Esophagus muscularis mucosa (tissue), 4 donors: ENCODE measurements at regions of chr2 and their contacts with region 1.

Region 1: DNA sequence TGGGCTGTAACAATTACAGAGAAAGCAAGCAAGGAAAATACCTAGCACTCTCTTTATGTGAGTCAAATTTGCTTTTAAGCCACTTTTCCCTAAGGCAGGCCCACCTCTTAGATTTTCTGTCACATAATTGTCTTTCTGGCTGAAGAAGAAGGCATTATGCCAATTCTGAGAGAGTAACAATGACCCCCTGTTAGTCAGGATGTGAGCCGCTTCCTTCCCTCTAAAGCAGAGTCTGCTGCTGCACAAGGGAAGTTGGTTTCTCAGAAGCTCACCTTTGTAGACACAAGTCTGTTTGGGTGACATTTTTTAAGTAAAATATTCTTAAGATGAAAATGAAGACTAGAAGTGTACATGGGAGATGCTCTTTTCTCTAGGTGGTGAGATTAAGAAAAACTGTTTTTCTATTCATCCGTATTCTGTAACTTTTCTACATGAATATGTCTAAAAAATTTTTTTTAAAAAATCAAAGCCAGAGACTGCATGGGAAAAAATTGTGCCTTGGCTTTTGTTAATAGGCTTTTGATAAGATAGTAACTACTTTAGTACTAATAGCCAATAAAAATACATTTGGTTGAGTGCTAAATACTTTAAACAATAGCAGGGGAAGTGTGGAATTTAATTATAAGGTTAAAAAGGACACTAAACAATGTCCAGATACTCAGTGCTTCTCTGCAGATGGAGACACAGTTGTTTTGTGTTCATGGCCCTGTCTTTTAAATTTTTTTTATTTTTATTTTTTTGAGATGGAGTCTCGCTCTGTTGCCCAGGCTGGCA is 33.4 kb upstream of the VPS54 start:
- DNase-seq: no peak
- H3K4me3 ChIP-seq: no peak overlapping the region
- H3K27ac ChIP-seq: peak overlapping the region in 3 of 4 donors; percentile 13 to 42 (median 16)
- H3K4me1 ChIP-seq: peaks cover 0 to 7% (median 5%) of the 10 kb centered on the region in 4 donors
- H3K27me3 ChIP-seq: no peaks in the 10 kb centered on the region
- CTCF ChIP-seq: no peak
- EP300 ChIP-seq: no peak
- POLR2A ChIP-seq: no peak

Region 2: DNA sequence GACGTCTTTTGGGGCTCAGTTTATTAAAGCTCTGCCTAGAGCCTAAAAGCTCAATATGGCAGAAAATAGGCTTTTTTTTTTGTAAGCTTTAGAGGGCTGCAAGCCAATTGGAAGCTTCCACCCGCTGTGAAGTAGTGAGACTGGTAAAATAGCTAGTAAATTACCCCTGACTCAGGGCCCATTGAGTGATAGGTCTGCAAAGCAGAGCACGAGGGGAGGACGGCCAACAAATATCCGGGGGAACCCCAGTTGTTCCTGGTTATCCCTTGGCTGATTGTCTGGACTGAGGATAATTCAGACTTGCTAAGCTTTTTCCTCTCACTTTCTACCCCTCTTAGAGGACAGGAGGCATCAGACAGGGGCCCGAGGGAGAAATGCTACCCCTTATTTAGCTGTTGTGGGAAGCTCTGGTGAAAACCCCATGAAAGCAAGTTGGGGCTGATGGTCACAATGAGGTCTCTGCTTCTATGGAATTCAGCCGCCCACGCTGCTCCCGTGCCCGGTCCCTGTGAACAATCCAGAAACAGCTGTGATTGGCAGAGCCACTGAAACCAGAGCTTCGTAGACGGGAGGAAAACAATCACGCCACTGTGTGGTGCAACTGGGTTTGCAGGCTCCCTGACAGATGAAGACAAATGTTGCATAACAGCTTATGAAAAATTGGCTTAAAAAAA is 259.4 kb after region 1 on chr2:
- intact Hi-C with region 1: loop called (anchors 5 kb)
- DNase-seq: peak; percentile 92
- H3K4me3 ChIP-seq: peak overlapping the region in 3 of 4 donors; percentile 10 to 22 (median 18)
- H3K27ac ChIP-seq: peak overlapping the region in 2 of 4 donors; percentile 7 to 46
- H3K4me1 ChIP-seq: peaks cover 16 to 18% (median 16%) of the 10 kb centered on the region in 4 donors
- H3K27me3 ChIP-seq: no peaks in the 10 kb centered on the region
- CTCF ChIP-seq: peak; percentile 40 to 52 (median 44)
- EP300 ChIP-seq: no peak
- POLR2A ChIP-seq: no peak

Region 3: DNA sequence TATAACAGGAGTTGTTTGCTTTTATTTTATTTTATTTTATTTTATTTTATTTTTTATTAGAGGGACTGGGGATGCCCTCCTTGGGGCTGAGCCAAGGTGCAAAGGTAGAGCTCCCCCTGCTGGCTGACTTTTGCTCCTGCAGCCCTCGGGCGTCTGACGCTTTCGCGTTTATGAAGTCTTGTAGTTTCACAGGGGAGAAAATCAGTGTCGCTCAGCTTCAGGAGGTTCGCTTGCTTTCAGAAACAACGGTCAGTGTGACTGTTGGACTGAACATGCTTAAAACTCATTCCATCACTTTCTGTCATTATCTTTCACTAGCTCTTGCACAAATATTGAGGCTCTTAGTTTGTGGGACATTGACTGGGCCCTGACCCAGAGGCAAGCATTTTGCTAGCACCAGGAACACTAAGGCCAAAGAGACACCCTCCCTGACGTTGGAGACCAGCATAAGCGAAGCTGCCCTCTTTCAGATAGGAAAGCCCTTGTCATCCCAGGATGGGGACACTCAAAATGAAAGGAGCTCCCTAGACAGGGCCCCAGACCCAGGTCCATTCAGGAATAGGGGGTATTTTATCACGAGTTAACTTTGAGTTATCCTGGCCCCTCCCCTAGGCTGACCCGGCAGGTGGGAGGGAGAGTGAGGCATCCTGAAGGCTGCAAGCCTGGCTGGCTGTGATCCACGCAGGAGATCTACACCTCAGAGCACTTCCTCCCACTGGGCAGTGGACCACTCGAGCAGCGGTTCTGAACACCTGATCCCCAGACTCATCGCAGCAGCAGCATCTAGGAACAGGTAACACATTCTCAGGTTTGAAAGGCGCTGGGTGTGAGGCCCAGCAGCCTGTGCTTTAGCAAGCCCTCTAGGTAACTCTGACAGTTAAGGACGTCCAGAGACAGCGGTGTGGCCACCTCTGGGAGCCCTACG is 435.7 kb after region 1 on chr2:
- intact Hi-C with region 1: loop called (anchors 5 kb)
- DNase-seq: no peak
- H3K4me3 ChIP-seq: no peak overlapping the region
- H3K27ac ChIP-seq: no peak overlapping the region
- H3K4me1 ChIP-seq: peaks cover 8 to 30% (median 24%) of the 10 kb centered on the region in 4 donors
- H3K27me3 ChIP-seq: no peaks in the 10 kb centered on the region
- CTCF ChIP-seq: peak; percentile 93 to 97 (median 94)
- EP300 ChIP-seq: no peak
- POLR2A ChIP-seq: no peak